BJ (cell line): ENCODE measurements at regions of chr7 and their contacts with region 1.

Region 1: GRCh38 chr7:30740424-30741181 is 11.3 kb upstream of the INMT start:
- DNase-seq: no peak
- H3K4me3 ChIP-seq: no peak overlapping the region
- H3K27me3 ChIP-seq: peaks cover 9% of the 10 kb centered on the region
- CTCF ChIP-seq: peak; percentile 99

Region 2: GRCh38 chr7:30510124-30511075 is 230.2 kb before region 1 on chr7:
- CTCF ChIA-PET with region 1: interaction called, 12 read pairs
- POLR2A ChIA-PET with region 1: no interaction called
- DNase-seq: no peak
- H3K4me3 ChIP-seq: no peak overlapping the region
- H3K27me3 ChIP-seq: no peaks in the 10 kb centered on the region
- CTCF ChIP-seq: peak; percentile 84

Region 3: DNA sequence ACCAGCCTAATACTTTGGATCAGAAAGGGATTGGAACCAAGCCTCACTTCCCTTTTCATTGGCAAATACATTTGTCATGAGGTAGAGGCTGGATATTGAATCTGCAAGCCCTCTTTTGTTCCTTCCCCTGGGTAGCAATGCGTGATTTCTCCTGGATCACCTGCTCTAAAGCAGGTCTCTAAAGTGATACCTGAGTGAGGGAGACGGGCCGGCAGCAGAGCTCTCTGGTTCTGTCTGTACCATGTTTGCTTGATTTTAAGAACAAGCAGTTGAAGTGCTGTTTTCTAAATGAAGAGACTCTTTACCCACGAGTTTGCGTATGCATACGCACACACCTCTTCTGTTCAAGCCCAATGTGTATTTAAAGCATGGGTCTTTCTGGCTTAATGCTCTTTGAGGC is 104.8 kb before region 1 on chr7:
- CTCF ChIA-PET with region 1: no interaction called
- POLR2A ChIA-PET with region 1: no interaction called
- DNase-seq: no peak
- H3K4me3 ChIP-seq: no peak overlapping the region
- H3K27me3 ChIP-seq: no peaks in the 10 kb centered on the region
- CTCF ChIP-seq: no peak

Region 4: DNA sequence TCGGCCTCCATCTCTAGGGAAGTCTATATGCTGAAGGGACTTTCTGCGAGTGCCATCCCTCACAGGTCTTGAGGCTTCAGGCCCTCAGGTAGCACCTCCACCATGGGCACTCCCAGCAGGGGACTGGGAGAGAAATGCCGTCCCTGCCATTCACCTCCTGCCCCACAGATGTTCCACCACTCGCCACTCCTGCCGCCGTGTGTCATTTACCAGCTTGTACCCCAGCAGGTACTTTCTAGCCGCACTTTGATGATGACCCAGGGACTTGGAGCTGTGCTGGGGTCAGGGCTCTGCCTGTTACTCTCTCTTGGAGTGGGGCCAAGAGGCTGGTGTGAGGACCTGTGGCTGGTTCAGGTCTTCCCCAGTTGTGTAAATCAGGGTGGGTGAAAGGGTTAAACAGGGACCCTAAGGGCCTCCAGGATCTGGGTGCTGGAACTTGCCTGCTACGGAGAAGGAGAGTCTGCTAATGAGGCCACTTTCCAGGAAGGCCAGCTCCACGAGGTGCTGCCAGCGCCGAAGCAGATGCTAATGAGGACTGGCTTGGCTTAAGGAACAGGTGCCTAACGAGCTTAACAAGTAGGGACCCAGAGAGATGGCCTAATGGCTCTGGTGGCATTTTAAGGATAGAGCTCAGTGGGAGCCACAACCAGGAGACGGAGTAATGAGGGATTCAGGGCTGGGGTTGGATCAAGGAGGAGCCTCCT is 90.7 kb before region 1 on chr7:
- CTCF ChIA-PET with region 1: no interaction called
- POLR2A ChIA-PET with region 1: no interaction called
- DNase-seq: no peak
- H3K4me3 ChIP-seq: no peak overlapping the region
- H3K27me3 ChIP-seq: no peaks in the 10 kb centered on the region
- CTCF ChIP-seq: no peak

Region 5: GRCh38 chr7:30727061-30727945 is 13.3 kb before region 1 on chr7:
- CTCF ChIA-PET with region 1: interaction called, 47 read pairs
- POLR2A ChIA-PET with region 1: no interaction called
- DNase-seq: no peak
- H3K4me3 ChIP-seq: no peak overlapping the region
- H3K27me3 ChIP-seq: peaks cover 29% of the 10 kb centered on the region
- CTCF ChIP-seq: no peak

Region 6: GRCh38 chr7:30764030-30764975 is 23.7 kb after region 1 on chr7:
- CTCF ChIA-PET with region 1: interaction called, 11 read pairs
- POLR2A ChIA-PET with region 1: no interaction called
- DNase-seq: no peak
- H3K4me3 ChIP-seq: no peak overlapping the region
- H3K27me3 ChIP-seq: peaks cover 11% of the 10 kb centered on the region
- CTCF ChIP-seq: no peak

Region 7: DNA sequence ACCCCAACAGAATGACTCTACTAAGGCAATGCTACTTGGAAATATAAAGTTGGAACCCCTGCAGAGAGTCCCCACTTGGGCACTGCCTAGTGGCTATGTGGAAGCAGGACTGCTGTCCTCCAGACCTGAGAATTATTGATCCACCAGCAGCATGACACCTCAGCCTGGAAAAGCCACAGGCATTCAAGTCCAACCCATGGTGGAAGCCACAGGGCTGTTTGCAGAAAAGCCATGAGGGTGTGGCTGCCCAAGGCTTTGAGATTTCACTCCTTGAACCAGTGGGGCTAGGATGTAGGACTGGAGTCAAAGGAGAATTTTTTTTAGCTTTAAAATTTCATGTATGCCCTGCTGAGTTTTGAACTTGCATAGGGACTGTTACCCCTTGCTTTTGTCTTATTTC is 209.6 kb after region 1 on chr7:
- CTCF ChIA-PET with region 1: no interaction called
- POLR2A ChIA-PET with region 1: no interaction called
- DNase-seq: no peak
- H3K4me3 ChIP-seq: no peak overlapping the region
- H3K27me3 ChIP-seq: peaks cover 6% of the 10 kb centered on the region
- CTCF ChIP-seq: no peak

Region 8: GRCh38 chr7:31100445-31100844 is 359.8 kb after region 1 on chr7:
- CTCF ChIA-PET with region 1: no interaction called
- POLR2A ChIA-PET with region 1: no interaction called
- DNase-seq: no peak
- H3K4me3 ChIP-seq: no peak overlapping the region
- H3K27me3 ChIP-seq: no peaks in the 10 kb centered on the region
- CTCF ChIP-seq: no peak

Region 9: GRCh38 chr7:31122649-31123058 is 382.1 kb after region 1 on chr7:
- CTCF ChIA-PET with region 1: interaction called, 28 read pairs
- POLR2A ChIA-PET with region 1: no interaction called
- DNase-seq: peak; percentile 46
- H3K4me3 ChIP-seq: no peak overlapping the region
- H3K27me3 ChIP-seq: peaks cover 2% of the 10 kb centered on the region; the same call in 1 of the 2 replicates
- CTCF ChIP-seq: peak; percentile 83